ENCODE measurements at regions of chr6 and their contacts with region 1.

Region 1: DNA sequence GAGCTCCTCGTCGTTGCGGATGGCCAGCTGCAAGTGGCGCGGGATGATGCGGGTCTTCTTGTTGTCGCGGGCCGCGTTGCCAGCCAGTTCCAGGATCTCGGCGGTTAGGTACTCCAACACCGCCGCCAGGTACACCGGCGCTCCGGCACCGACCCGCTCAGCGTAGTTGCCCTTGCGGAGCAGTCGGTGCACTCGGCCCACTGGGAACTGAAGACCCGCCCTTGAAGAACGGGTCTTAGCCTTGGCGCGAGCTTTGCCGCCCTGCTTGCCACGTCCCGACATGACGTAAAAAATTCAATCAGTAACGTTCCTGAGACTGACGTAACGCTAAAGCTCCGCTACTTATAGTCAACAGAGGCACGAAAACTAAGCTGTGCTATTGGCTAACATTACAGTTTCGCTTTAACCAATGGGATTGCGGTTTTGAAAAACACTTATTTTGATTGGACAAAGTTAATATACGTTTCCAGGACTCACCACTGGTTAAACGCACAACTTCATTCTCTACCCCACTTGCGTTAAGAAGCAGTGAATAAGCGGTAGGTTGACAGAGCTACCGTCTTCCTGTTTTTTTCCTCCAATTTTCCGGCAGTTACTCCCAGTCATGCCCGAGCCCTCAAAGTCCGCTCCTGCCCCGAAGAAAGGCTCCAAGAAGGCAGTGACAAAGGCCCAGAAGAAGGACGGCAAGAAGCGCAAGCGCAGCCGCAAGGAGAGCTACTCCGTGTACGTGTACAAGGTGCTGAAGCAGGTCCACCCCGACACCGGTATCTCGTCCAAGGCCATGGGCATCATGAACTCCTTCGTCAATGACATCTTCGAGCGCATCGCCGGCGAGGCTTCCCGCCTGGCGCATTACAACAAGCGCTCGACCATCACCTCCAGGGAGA is 73.9 kb downstream of the OR2B2 start:
- DNase-seq: peak; percentile 78 to 97
- ATAC-seq: peak; percentile 66 to 86 (median 79)
- H3K4me3 ChIP-seq: peak overlapping the region; percentile 82
- H3K4me3 Mint-ChIP-seq: no peak overlapping the region
- H3K27ac ChIP-seq: peak overlapping the region; percentile 98
- H3K27ac Mint-ChIP-seq: no peak overlapping the region
- H3K4me1 ChIP-seq: peaks cover 32% of the 10 kb centered on the region
- H3K4me1 Mint-ChIP-seq: peaks cover 6 to 7% of the 10 kb centered on the region in 2 donors
- H3K27me3 ChIP-seq: no peaks in the 10 kb centered on the region
- H3K27me3 Mint-ChIP-seq: no peaks in the 10 kb centered on the region
- CTCF ChIP-seq: no peak

Region 2: GRCh38 chr6:26285143-26286134 is 1552.9 kb before region 1 on chr6:
- intact Hi-C with region 1: loop called (anchors 10 kb)
- DNase-seq: peak; percentile 83 to 98
- ATAC-seq: peak; percentile 76 to 93 (median 83)
- H3K4me3 ChIP-seq: peak overlapping the region; percentile 70
- H3K4me3 Mint-ChIP-seq: peak overlapping the region; percentile 95
- H3K27ac ChIP-seq: peak overlapping the region; percentile 97
- H3K27ac Mint-ChIP-seq: peak overlapping the region; percentile 98
- H3K4me1 ChIP-seq: peaks cover 17% of the 10 kb centered on the region
- H3K4me1 Mint-ChIP-seq: peaks cover 34 to 37% of the 10 kb centered on the region in 2 donors
- H3K27me3 ChIP-seq: no peaks in the 10 kb centered on the region
- H3K27me3 Mint-ChIP-seq: peaks cover 3 to 8% of the 10 kb centered on the region in 2 donors
- CTCF ChIP-seq: no peak

Region 3: GRCh38 chr6:27772261-27773001 is 65.9 kb before region 1 on chr6:
- intact Hi-C with region 1: no loop called
- DNase-seq: peak; percentile 84 to 91
- ATAC-seq: peak; percentile 93 to 99 (median 99)
- H3K4me3 ChIP-seq: no peak overlapping the region
- H3K4me3 Mint-ChIP-seq: no peak overlapping the region
- H3K27ac ChIP-seq: no peak overlapping the region
- H3K27ac Mint-ChIP-seq: no peak overlapping the region
- H3K4me1 ChIP-seq: peaks cover 12% of the 10 kb centered on the region
- H3K4me1 Mint-ChIP-seq: peaks cover 6 to 8% of the 10 kb centered on the region in 2 donors
- H3K27me3 ChIP-seq: no peaks in the 10 kb centered on the region
- H3K27me3 Mint-ChIP-seq: peaks cover 15 to 21% of the 10 kb centered on the region in 2 donors
- CTCF ChIP-seq: peak; percentile 93

Region 4: DNA sequence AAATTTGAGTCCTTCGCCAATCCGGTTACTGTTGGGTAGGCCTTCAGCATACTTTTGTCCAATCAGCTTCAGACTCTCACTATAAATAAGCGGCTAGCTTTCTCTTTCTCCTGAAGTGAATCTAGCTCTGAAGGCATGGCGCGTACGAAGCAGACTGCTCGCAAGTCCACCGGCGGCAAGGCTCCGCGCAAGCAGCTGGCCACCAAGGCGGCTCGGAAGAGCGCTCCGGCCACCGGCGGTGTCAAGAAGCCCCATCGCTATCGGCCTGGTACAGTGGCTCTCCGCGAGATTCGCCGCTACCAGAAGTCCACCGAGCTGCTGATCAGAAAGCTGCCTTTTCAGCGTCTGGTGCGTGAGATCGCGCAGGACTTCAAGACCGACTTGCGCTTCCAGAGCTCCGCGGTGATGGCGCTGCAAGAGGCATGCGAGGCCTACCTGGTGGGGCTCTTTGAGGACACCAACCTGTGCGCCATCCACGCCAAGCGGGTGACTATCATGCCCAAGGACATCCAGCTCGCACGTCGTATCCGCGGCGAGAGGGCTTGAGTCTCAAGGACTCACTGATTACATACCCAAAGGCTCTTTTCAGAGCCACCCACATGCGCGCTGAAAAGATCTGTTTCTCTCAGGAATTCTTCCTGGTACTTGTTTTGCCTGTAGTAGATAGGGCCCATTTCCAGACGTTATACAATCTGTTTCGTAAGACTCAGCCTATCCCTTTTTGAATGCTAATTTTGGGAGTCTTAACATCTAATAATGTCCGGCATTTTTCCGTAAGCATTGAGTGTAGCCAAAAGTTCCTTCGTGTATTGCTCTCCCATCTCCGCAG is 28.1 kb before region 1 on chr6:
- intact Hi-C with region 1: loop called (anchors 1 kb)
- DNase-seq: peak; percentile 76 to 95
- ATAC-seq: peak; percentile 55 to 71 (median 63)
- H3K4me3 ChIP-seq: peak overlapping the region; percentile 63
- H3K4me3 Mint-ChIP-seq: peak overlapping the region; percentile 95
- H3K27ac ChIP-seq: peak overlapping the region; percentile 88
- H3K27ac Mint-ChIP-seq: peak overlapping the region; percentile 96 to 99
- H3K4me1 ChIP-seq: peaks cover 37% of the 10 kb centered on the region
- H3K4me1 Mint-ChIP-seq: peaks cover 49 to 56% of the 10 kb centered on the region in 2 donors
- H3K27me3 ChIP-seq: no peaks in the 10 kb centered on the region
- H3K27me3 Mint-ChIP-seq: no peaks in the 10 kb centered on the region
- CTCF ChIP-seq: no peak

Region 5: DNA sequence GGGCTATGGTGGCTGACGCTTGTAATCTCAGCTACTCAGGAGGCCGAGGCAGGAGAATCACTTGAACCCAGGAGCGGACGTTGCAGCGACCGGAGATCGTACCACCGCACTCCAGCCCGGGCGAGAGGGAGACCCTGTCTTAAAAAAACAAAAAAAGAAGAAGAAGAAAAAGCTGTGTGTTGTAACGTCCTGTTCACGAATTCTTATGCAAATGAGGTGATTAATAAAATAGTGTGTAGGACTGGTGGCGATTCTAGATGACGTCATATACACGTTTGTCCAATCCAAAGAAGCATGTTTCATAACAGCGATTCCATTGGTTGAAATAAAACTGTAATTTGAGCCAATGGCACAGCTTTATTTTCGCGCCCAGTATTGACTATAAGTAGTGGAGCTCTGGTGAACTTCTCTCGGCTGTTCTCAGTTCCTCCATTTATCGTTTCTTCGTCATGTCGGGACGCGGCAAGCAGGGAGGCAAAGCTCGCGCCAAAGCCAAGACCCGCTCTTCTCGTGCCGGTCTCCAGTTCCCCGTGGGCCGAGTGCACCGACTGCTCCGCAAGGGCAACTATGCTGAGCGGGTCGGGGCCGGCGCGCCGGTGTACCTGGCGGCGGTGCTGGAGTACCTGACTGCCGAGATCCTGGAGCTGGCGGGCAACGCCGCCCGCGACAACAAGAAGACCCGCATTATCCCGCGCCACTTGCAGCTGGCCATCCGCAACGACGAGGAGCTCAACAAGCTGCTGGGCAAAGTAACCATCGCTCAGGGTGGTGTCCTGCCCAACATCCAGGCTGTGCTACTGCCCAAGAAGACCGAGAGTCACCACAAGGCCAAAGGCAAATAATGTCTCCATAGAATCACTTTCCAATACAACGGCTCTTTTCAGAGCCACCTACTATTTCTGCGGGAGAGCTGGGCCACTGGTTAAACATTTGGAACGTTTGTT is 26.9 kb after region 1 on chr6:
- intact Hi-C with region 1: loop called (anchors 1 kb)
- DNase-seq: peak; percentile 63 to 96
- ATAC-seq: peak; percentile 76 to 89 (median 81)
- H3K4me3 ChIP-seq: peak overlapping the region; percentile 69
- H3K4me3 Mint-ChIP-seq: peak overlapping the region; percentile 90
- H3K27ac ChIP-seq: peak overlapping the region; percentile 82
- H3K27ac Mint-ChIP-seq: peak overlapping the region; percentile 92 to 94
- H3K4me1 ChIP-seq: peaks cover 35% of the 10 kb centered on the region
- H3K4me1 Mint-ChIP-seq: peaks cover 44% of the 10 kb centered on the region in 2 donors
- H3K27me3 ChIP-seq: no peaks in the 10 kb centered on the region
- H3K27me3 Mint-ChIP-seq: no peaks in the 10 kb centered on the region
- CTCF ChIP-seq: no peak

Region 6: DNA sequence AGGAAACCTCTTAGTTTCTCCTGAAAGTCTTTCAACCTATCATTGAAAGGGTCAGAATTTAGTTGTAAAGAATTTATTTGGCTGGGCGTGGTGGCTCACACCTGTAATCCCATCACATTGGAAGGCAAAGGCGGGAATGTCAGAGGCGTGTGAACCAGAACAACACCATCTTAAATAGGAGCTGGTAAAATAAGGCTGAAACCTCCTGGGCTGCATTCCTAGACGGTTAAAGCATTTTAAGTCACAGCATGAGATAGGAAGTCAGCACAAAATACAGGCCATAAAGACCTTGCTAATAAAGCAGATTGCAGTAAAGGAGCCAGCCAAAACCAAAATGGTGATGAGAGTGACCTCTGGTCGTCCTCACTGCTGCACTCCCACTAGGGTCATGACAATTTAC is 44.3 kb after region 1 on chr6:
- intact Hi-C with region 1: no loop called
- DNase-seq: no peak
- ATAC-seq: no peak
- H3K4me3 ChIP-seq: no peak overlapping the region
- H3K4me3 Mint-ChIP-seq: no peak overlapping the region
- H3K27ac ChIP-seq: no peak overlapping the region
- H3K27ac Mint-ChIP-seq: no peak overlapping the region
- H3K4me1 ChIP-seq: no peaks in the 10 kb centered on the region
- H3K4me1 Mint-ChIP-seq: no peaks in the 10 kb centered on the region
- H3K27me3 ChIP-seq: no peaks in the 10 kb centered on the region
- H3K27me3 Mint-ChIP-seq: no peaks in the 10 kb centered on the region
- CTCF ChIP-seq: no peak

Region 7: DNA sequence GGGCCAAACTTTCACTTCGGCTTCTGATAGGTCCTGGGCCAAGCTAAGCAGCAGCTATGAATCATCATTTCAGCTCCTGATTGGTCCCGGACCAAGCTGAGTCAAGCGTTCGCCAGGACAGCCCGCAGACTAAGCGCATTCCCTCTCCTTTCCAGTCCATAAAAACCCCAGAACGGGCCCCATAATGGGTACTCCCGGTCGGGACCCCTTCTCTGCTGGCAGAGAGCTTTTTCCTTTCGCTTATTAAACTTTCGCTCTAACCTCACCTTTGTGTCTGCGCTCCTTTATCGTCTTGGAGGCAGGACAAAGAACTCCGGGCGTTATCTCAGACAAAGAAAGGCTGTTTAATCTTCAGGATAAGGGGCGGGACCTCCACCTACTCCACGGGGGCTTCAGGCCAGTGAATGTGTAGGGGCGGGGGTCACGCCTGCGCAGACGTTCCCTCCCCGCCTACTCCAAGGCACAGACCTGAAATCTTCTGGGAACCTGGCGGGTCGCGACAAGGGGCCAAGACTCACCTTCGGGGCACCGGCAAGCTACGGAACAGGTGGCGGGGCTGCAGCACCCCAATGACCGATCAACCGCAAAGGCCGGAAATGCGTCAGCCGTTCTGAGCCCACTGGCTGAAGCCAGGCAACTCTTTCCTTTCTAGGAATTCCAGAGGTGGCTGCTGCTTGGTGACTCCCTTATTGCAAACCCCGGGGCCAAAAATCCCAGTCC is 497.4 kb after region 1 on chr6 and contains the start of gene ZSCAN31:
- intact Hi-C with region 1: loop called (anchors 1 kb)
- DNase-seq: peak; percentile 78 to 91
- ATAC-seq: peak; percentile 86 to 95 (median 89)
- H3K4me3 ChIP-seq: peak within 1 kb of the TSS; percentile 78
- H3K4me3 Mint-ChIP-seq: no peak within 1 kb of the TSS
- H3K27ac ChIP-seq: peak within 1 kb of the TSS; percentile 93
- H3K27ac Mint-ChIP-seq: no peak within 1 kb of the TSS
- H3K4me1 ChIP-seq: peaks cover 18% of the 10 kb centered on the region
- H3K4me1 Mint-ChIP-seq: peaks cover 0 to 15% of the 10 kb centered on the region in 2 donors
- H3K27me3 ChIP-seq: no peaks in the 10 kb centered on the region
- H3K27me3 Mint-ChIP-seq: peaks cover 0 to 11% of the 10 kb centered on the region in 2 donors
- CTCF ChIP-seq: no peak
- total RNA-seq, gene ZSCAN31: 0.65 to 2.2 (median 0.72) TPM

Measured in natural killer cell (primary cell).